ENCODE measurements at regions of chr4 and their contacts with region 1.

Region 1: GRCh38 chr4:92305148-92305877 is 1.5 kb downstream of the GRID2 start:
- DNase-seq: peak; percentile 59
- ATAC-seq: peak; percentile 90 to 93

Region 2: GRCh38 chr4:91127831-91128230 is 1177.5 kb before region 1 on chr4:
- intact Hi-C with region 1: loop called in 1 of 2 experiments (anchors 10 kb)
- DNase-seq: no peak
- ATAC-seq: peak; percentile 81 to 92

Region 3: DNA sequence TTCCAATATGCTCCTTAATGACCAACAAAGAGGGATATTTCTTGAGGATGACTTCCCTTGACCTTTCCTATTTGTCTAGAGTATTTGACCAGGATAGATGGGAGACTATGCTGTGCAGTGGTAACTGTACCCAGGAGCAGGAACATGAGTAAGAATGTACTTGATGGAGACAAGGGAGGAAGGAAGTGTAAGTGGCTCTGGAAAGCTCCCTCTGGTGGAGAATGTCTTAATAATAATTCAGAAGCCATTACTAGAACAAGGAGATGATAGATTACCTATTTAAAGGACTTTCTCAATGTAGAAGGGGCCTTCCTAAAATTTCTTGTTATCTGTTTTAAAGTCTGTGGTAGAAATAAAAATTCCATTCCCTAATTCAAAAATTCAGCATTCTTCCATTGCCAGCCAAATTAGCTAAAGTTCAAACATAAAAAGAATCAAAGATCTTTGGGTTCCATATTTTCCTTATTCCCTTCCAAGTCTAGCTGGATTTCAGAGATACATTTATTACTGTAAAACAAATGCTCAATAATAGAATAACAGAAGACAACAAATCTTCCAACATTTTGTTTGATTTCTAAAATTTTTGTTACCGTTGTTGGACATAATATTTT is 82.3 kb after region 1 on chr4:
- intact Hi-C with region 1: loop called in 1 of 2 experiments (anchors 10 kb)
- DNase-seq: no peak
- ATAC-seq: peak in 1 of 2 donors; percentile 54